ENCODE measurements at regions of chr11 and their contacts with region 1.

Region 1: GRCh38 chr11:73135346-73136284 is 6.5 kb downstream of the FCHSD2 start:
- DNase-seq: peak; percentile 46 to 64
- H3K4me3 ChIP-seq: no peak overlapping the region
- H3K4me3 Mint-ChIP-seq: no peak overlapping the region
- H3K27ac Mint-ChIP-seq: peak overlapping the region; percentile 73
- H3K4me1 ChIP-seq: peaks cover 26% of the 10 kb centered on the region
- H3K4me1 Mint-ChIP-seq: peaks cover 23% of the 10 kb centered on the region
- H3K27me3 ChIP-seq: no peaks in the 10 kb centered on the region
- H3K27me3 Mint-ChIP-seq: no peaks in the 10 kb centered on the region
- CTCF ChIP-seq: no peak

Region 2: DNA sequence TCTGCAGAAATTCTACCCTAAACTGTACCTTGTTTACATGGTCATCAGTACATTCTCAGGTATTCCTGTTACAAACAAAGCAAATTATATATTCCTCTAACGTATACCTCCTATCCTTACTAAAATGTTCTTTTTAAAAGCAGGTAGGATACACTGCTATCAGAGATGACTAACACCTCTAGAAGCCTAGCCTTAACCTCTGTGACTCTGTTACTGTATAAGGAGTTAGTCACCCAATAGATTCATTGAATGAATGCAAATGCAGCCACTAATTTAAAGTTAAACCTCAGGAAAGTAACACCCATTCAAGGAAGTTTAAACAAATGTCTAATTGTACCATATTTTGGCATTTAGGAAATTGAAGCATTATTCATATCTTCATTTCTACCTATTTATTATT is 75.7 kb before region 1 on chr11:
- CTCF ChIA-PET with region 1: no interaction called
- POLR2A ChIA-PET with region 1: no interaction called
- intact Hi-C with region 1: loop called (anchors 1 kb)
- DNase-seq: no peak
- H3K4me3 ChIP-seq: no peak overlapping the region
- H3K4me3 Mint-ChIP-seq: no peak overlapping the region
- H3K27ac Mint-ChIP-seq: no peak overlapping the region
- H3K4me1 ChIP-seq: peaks cover 16% of the 10 kb centered on the region
- H3K4me1 Mint-ChIP-seq: peaks cover 22% of the 10 kb centered on the region
- H3K27me3 ChIP-seq: no peaks in the 10 kb centered on the region
- H3K27me3 Mint-ChIP-seq: no peaks in the 10 kb centered on the region
- CTCF ChIP-seq: no peak